ENCODE measurements at regions of chr6 and their contacts with region 1.

Region 1: DNA sequence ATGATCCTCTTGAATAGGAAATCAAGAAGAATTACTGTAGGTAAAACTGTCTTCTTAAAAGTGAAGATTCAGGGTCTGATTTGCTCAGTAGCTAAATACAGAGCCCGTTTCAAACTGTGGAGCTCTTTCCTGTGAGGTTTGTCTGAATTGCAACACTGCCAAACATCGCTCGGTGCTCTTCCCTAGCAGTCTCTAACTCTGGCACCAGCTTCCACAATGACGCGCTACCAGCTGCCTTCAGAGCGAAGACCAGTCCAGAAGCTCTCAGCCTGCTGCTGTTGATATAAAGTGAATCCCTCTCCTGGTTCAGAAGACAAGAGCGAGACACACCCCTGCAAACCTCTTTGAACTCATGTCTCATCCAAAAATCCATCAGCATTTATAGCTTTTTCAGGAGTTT is 447.0 kb downstream of the LMBRD1 start:
- DNase-seq: peak; percentile 62

Region 2: DNA sequence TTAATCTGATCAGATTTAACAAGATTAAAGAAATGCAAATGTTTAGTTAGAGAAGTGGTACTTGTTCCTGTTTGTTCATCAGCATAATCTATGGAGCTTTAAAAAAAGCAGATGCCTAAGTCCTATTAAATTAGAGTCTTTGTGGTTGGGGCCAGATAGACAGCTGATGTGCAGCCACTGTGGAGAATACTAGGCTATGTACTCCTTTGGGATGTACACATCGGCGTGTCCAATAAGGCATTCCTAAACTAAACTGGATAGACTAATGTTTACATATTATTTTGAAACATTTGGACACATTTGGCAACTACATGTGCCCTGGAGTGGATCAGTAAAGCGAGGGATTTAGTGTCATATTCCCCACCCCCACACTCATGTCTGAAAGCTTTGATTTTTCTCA is 12.5 kb before region 1 on chr6:
- intact Hi-C with region 1: no loop called
- DNase-seq: no peak

Region 3: DNA sequence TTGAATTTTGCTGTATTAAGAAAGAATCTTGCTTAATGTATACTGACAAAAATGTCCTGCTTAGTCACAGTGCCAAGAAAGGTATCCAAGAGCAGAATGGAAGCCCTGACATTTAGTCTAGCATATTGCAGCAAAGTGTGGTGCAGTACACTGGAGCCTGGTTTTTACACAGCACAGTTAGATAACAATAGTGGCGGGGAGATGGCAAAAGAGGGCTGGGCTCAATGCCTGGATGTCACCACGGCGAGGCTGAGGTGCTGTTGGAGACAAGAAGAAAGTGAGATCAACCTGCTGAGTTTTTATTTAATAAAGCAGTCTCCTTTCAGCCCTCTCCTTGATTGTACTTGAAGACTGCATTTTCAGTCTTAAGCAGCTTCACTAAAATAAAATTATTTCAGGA is 21.0 kb after region 1 on chr6:
- intact Hi-C with region 1: no loop called
- DNase-seq: no peak

Region 4: DNA sequence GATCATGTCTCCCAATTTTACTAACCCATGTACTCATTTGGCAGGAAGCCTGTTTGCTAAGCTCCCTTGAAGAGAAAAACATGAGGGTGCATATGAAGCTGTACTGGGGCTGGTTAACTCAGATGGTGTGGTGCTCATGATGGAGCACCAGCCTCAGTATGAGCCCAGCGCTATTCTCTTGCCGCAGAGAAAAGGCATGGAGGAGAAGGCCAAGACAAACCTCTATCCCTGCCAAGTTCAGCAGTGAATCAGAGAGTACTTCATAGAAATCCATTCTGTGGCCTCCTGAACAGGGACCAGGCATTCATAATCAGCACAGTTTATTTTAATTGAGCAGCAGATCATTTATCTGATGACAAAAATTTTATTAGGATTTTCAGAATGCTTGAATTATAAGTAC is 49.0 kb after region 1 on chr6:
- intact Hi-C with region 1: loop called in 1 of 2 experiments (anchors 2 kb)
- DNase-seq: no peak

Measured in posterior vena cava (tissue), 2 donors.